ENCODE measurements at regions of chr4 and their contacts with region 1.

Region 1: DNA sequence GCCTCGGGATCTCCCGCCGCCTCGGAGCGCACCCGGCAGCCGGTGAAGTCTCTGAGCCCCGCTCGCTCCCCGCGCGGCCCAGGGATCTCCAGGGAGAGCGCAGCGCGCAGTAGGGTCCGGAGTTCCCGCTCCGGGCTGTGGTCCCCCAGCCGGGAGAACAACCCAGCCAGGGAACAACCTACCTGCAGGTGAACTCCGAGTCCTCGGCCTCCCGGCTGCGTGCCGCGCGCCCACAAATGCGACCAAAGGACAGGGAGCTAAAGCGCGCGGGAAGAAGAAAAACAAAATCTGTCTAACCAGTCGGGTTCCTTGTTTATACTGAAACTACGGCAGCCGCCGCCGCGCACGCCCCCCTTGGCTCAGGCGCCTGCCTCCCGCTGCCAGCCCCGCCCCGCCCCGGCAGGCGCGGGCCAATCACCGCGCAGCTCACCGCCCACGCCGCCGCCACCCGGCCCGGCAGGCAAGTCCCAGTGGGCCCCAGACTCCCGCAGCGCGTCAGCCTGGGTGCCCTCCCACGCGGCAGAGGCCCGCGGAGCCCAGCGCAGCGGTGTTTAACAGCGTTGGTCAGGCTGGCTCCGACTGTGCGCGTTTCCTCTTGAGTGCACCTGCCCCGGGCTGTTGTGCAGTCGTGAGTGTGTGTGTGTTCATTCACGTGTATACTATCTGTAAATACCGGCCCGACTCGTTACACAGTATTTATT is at the start of gene RASGEF1B:
- DNase-seq: peak; percentile 92
- H3K4me3 ChIP-seq: peak within 1 kb of the TSS; percentile 82
- H3K27ac ChIP-seq: peak within 1 kb of the TSS; percentile 98
- H3K4me1 ChIP-seq: peaks cover 6% of the 10 kb centered on the region
- H3K27me3 ChIP-seq: no peaks in the 10 kb centered on the region
- CTCF ChIP-seq: no peak
- total RNA-seq, gene RASGEF1B: 7.8 to 24.5 TPM

Region 2: GRCh38 chr4:81565142-81565870 is 93.6 kb after region 1 on chr4:
- intact Hi-C with region 1: loop called (anchors 10 kb)
- DNase-seq: peak; percentile 85
- H3K4me3 ChIP-seq: no peak overlapping the region
- H3K27ac ChIP-seq: peak overlapping the region; percentile 73
- H3K4me1 ChIP-seq: no peaks in the 10 kb centered on the region
- H3K27me3 ChIP-seq: no peaks in the 10 kb centered on the region
- CTCF ChIP-seq: no peak

Region 3: DNA sequence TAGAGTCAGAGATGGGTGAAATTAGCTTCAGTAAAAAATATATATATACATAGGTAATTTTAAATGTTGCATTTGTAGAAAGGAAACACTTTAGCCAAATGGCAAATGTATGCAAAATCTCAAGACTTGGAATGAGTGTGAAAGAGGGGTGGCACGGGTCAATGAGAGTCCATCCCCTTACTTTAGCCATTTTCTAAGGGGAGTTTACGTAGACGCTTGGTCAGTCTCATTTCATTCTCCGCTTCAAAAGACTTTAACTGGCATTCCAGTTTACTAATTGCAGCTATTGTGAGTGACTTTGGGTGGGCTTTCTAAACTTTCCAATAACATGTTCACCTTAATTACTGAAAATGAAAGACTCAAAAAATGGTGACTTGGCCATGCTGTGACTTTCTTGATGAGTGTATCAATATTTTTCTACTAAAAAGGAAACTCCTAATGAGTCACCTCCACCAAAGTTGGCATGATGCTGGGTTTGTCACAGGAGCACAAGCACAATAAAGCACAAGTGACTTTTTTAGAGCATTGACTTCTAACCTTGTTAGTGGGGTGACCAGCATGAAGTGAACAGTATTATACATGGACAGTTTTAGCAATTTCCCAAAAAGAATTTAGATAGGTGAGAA is 356.0 kb after region 1 on chr4:
- intact Hi-C with region 1: no loop called
- DNase-seq: no peak
- H3K4me3 ChIP-seq: no peak overlapping the region
- H3K27ac ChIP-seq: no peak overlapping the region
- H3K4me1 ChIP-seq: no peaks in the 10 kb centered on the region
- H3K27me3 ChIP-seq: no peaks in the 10 kb centered on the region
- CTCF ChIP-seq: no peak

Region 4: DNA sequence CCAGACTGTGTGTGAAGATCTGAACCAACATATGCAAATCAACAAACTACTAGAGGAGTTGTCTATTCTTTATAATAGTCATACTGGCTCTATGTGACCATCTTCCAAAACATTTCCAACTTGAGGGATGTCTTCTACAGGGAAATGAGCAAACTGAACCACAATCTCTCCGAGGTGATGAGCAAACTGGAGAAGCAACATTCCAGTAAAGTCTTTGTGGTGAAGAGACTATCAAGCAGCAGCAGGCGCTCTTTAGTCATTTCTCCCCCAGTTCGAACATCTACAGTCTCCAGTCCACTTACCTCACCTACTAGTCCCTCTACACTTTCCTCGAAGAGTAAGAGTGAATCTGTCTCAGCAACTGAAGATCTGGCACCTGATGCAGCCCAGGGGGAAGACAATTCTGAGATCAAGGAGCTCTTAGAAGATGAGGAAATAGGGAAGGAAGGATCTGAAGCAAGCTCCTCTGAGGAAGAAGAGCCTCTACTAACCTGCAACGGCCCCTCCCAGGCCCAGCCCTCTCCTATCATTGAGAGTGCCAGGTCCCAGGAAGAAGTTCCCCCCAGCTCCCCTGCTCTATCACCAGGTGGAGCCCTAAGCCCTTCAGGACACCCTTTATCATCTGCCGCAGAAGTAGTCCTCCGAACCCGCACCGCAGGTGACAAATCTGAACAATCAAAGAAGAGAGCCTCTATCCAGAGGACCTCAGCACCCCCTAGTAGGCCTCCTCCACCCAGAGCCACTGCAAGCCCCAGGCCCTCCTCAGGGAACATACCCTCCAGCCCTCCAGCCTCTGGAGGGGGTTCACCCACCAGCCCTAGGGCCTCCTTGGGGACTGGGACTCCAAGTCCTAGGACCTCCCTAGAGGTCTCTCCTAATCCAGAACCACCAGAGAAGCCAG is 803.9 kb after region 1 on chr4:
- intact Hi-C with region 1: loop called (anchors 10 kb)
- DNase-seq: no peak
- H3K4me3 ChIP-seq: no peak overlapping the region
- H3K27ac ChIP-seq: no peak overlapping the region
- H3K4me1 ChIP-seq: no peaks in the 10 kb centered on the region
- H3K27me3 ChIP-seq: no peaks in the 10 kb centered on the region
- CTCF ChIP-seq: no peak

Measured in colonic mucosa (tissue), 4 donors.